PC-9 (cell line): ENCODE measurements at regions of chr3 and their contacts with region 1.

Region 1: GRCh38 chr3:150371741-150372254 is 36.3 kb upstream of the TSC22D2 start:
- DNase-seq: peak; percentile 77 to 99
- H3K4me3 ChIP-seq: peak overlapping the region; percentile 53; the same call in 1 of the 2 replicates
- H3K27ac ChIP-seq: peak overlapping the region; percentile 92
- H3K4me1 ChIP-seq: peaks cover 63% of the 10 kb centered on the region
- H3K27me3 ChIP-seq: no peaks in the 10 kb centered on the region
- CTCF ChIP-seq: no peak

Region 2: GRCh38 chr3:150114873-150115540 is 256.8 kb before region 1 on chr3:
- CTCF ChIA-PET with region 1: no interaction called
- POLR2A ChIA-PET with region 1: no interaction called
- intact Hi-C with region 1: no loop called
- DNase-seq: no peak
- H3K4me3 ChIP-seq: no peak overlapping the region
- H3K27ac ChIP-seq: no peak overlapping the region
- H3K4me1 ChIP-seq: no peaks in the 10 kb centered on the region
- H3K27me3 ChIP-seq: no peaks in the 10 kb centered on the region
- CTCF ChIP-seq: no peak

Region 3: DNA sequence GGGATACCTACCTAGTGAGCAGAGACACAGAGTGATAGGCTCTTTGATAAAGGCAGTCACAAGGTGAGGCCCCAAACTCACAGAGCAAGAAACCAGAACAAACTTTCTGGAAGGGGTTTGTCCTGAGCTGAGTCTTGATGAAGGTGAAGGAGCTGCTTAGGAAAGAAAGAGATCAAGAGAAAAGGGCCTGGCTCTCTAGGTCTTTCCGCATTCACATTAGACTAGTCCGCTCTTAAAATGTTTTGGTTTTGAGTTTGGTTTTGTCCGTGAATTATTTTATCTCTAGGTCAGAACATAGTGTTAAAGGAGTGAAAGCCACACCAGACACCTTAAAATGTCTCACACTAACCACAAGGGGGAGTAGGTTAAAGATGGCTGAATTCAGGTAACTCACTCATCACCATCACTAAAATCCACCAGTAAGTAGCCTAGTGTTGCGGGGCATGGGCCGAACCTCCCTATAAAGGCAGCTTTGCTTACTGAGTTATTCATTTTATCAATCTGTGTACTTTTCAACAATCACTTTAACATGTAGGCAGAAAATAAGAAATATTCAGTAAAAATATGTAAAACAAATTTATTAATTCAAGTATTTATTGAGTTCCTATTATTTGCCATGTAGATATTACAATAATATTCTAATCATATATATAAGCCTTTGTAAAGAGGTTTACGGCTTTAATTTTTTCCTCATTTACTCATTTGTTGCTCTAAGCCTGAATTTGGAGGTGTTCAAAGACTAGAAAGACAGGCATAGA is 85.2 kb before region 1 on chr3:
- CTCF ChIA-PET with region 1: no interaction called
- POLR2A ChIA-PET with region 1: no interaction called
- intact Hi-C with region 1: loop called (anchors 1 kb)
- DNase-seq: peak; percentile 25 to 42
- H3K4me3 ChIP-seq: no peak overlapping the region
- H3K27ac ChIP-seq: peak overlapping the region; percentile 4; the same call in 1 of the 2 replicates
- H3K4me1 ChIP-seq: peaks cover 11% of the 10 kb centered on the region; the same call in 1 of the 2 replicates
- H3K27me3 ChIP-seq: no peaks in the 10 kb centered on the region
- CTCF ChIP-seq: peak; percentile 79

Region 4: GRCh38 chr3:150314248-150315004 is 57.4 kb before region 1 on chr3:
- CTCF ChIA-PET with region 1: no interaction called
- POLR2A ChIA-PET with region 1: interaction called, 7 read pairs
- intact Hi-C with region 1: loop called (anchors 1 kb)
- DNase-seq: peak; percentile 75 to 92
- H3K4me3 ChIP-seq: no peak overlapping the region
- H3K27ac ChIP-seq: peak overlapping the region; percentile 36
- H3K4me1 ChIP-seq: peaks cover 60% of the 10 kb centered on the region
- H3K27me3 ChIP-seq: no peaks in the 10 kb centered on the region
- CTCF ChIP-seq: no peak

Region 5: GRCh38 chr3:150355574-150355973 is 16.2 kb before region 1 on chr3:
- CTCF ChIA-PET with region 1: interaction called, 11 read pairs
- POLR2A ChIA-PET with region 1: interaction called, 3 read pairs
- intact Hi-C with region 1: no loop called
- DNase-seq: no peak
- H3K4me3 ChIP-seq: no peak overlapping the region
- H3K27ac ChIP-seq: no peak overlapping the region
- H3K4me1 ChIP-seq: peaks cover 8% of the 10 kb centered on the region
- H3K27me3 ChIP-seq: no peaks in the 10 kb centered on the region
- CTCF ChIP-seq: no peak